ENCODE measurements at regions of chr4 and their contacts with region 1.

Region 1: GRCh38 chr4:176319704-176320339 is at the start of gene SPCS3:
- DNase-seq: peak; percentile 92 to 99 (median 98)

Region 2: DNA sequence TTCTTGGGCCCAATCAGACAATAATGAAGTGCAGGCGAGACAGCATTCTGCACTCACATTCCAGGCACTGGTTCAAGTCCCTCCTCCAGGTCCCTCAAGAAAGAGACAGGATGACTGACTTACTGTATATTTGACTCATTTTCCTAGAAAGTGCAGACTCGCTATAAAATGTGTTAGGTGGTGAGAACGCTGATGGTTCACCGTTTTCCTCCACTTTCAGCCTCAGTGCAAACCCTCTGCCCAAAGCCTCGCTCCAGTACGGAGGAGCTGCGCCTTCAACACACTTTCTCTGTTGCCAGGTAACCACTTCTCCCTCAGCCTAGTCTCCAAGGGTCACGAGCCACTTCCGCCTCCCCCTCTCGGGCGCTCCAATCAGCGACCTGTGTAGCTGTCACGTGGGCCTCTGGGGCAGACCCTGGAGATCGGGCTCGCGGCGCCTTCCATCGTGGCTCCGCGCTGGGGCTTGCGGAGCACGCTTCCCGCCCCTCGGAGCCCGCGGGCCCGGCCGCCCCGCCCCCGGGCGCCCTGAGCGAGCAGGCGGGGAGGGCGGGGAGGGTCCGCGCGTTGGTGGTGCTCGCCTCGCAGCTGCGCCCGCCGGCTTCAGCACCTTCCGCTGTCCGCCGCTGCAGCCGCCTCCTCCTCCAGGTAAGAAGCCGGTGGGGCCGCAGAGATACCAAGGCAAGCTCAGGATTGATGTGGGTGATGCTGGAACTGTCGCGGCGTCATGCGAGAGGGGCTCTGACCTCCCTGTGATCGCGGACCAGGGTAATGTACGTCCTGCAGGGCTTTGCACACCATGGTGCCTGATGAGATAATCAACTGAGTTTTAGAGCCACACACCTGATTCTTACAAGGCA is 254.2 kb before region 1 on chr4 and contains the start of gene WDR17:
- intact Hi-C with region 1: loop called (anchors 10 kb)
- DNase-seq: peak; percentile 94 to 99 (median 97)

Region 3: DNA sequence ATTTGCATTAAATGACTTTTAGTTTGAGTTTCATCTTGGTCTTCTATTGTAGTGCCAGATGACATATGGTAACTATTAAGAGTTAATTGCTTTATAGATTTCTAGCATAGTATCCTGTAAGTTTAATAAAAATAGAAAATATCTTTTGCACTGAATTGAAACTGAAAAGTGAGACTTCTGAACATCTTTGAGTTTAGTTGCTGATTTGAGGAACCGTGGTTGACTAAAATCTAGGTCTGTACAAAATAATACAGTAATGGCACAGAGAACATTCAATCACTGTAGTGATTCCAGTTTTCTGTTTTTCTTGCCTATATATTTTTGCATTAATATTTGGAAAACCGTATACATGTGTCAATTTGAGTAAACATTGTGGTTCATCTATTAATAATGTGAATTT is 185.2 kb before region 1 on chr4:
- intact Hi-C with region 1: no loop called
- DNase-seq: no peak

Region 4: GRCh38 chr4:176195184-176195978 is 124.4 kb before region 1 on chr4 and contains the start of gene SPATA4:
- intact Hi-C with region 1: loop called (anchors 5 kb)
- DNase-seq: peak; percentile 90 to 98 (median 96)

Measured in head of caudate nucleus (tissue), 42 donors.